Aorta (tissue), 5 donors: ENCODE measurements at regions of chr11 and their contacts with region 1.

Region 1: DNA sequence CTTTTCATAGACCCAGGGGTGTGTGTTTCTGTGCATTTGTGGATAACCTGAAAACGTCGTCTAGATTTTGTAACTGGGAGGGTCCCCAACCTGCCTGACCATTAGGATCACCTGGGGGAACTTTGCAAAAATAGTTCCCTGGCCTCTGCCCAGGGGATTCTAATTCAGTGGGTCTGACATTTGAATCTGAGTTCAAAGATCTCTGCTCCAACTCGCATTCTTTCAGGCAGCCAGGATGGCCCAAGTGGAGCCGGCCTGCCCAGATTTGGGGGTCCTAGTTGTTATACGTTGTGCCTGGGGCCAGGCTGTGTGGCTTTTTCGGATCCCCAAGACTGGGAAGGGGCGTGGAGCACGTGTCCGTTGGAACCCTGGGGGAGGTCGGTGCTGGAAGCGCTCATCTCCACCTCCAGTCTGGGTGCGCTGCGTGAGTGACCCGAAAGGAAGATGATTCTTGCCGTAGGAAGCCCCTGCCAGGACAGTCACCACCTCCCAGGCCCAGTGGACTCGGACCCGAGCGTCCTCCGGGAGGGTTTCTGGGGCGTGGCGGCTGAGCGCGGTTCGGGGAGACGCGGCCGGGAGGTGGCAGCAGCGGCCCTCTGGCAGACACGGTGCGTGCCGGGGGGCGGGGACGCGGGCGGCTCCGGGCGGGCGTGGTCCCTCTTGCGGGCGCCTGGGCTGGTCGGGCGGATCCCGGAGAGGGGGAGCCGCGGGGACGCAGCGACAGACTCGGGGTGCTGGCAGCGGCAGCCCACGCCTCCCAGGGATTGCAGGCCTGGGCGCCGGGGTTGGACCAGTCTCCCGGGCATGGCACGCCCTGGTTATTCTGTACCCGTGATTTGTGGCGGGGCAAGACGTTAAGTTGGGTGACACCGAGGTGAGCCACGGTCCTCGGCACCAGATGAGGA is 29.2 kb upstream of the PLET1 start:
- DNase-seq: peak; percentile 88 to 96
- ATAC-seq: peak; percentile 95
- H3K4me3 ChIP-seq: peak overlapping the region; percentile 55 to 76
- H3K27ac ChIP-seq: peak overlapping the region; percentile 83 to 92
- H3K4me1 ChIP-seq: peaks cover 0 to 2% of the 10 kb centered on the region in 2 donors
- H3K27me3 ChIP-seq: no peaks in the 10 kb centered on the region

Region 2: DNA sequence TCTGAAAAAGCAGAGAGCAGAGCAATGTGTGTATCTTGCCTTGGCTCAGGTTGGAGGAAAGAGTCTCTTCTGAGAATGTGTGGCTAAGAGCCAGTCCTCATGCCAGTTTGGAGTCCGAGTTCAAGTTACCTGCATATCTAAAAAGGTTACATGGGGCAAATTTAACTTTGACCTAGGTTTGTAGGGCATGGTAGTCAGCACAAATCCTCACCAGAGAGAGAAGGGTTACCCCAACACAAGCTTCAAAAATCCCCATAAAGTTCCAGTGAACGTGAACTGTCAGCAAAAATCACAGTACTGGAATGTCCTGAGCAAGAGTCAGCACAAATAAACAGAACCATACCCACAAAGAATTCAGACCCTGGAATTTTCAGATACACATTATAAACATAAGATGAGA is 189.4 kb before region 1 on chr11:
- intact Hi-C with region 1: no loop called
- DNase-seq: no peak
- ATAC-seq: no peak
- H3K4me3 ChIP-seq: no peak overlapping the region
- H3K27ac ChIP-seq: no peak overlapping the region
- H3K4me1 ChIP-seq: no peaks in the 10 kb centered on the region
- H3K27me3 ChIP-seq: no peaks in the 10 kb centered on the region

Region 3: GRCh38 chr11:112318193-112318592 is 28.4 kb after region 1 on chr11:
- intact Hi-C with region 1: loop called in 1 of 2 experiments (anchors 1 kb)
- DNase-seq: no peak
- ATAC-seq: no peak
- H3K4me3 ChIP-seq: no peak overlapping the region
- H3K27ac ChIP-seq: peak overlapping the region in 1 of 2 donors; percentile 65
- H3K4me1 ChIP-seq: peaks cover 3 to 4% of the 10 kb centered on the region in 2 donors
- H3K27me3 ChIP-seq: no peaks in the 10 kb centered on the region

Region 4: GRCh38 chr11:112334381-112334780 is 44.5 kb after region 1 on chr11:
- intact Hi-C with region 1: no loop called
- DNase-seq: no peak
- ATAC-seq: no peak
- H3K4me3 ChIP-seq: no peak overlapping the region
- H3K27ac ChIP-seq: no peak overlapping the region
- H3K4me1 ChIP-seq: no peaks in the 10 kb centered on the region
- H3K27me3 ChIP-seq: no peaks in the 10 kb centered on the region

Region 5: DNA sequence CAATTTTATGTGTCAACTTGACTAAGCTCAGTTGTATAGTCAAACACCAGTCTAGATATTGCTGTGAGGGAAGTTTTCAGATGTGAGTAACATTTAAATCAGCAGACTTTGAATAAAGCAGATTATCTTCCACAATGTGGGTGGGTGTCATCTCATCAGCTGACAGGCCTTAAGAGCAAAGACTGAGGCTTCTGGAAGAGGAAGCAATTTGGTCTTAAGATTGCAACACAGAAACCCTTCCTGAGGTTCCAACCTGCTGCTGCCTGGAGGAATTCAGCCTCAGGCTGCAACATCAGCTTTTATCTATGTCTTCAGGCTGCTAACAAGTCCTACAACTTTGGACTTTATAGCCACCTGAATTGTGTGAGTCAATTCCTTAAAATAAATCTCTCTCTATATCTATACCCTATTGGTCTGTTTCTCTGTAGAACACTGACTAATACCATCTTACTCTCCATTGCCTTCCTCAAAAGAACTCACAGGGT is 248.0 kb after region 1 on chr11:
- intact Hi-C with region 1: no loop called
- DNase-seq: no peak
- ATAC-seq: no peak
- H3K4me3 ChIP-seq: no peak overlapping the region
- H3K27ac ChIP-seq: no peak overlapping the region
- H3K4me1 ChIP-seq: no peaks in the 10 kb centered on the region
- H3K27me3 ChIP-seq: no peaks in the 10 kb centered on the region

Region 6: DNA sequence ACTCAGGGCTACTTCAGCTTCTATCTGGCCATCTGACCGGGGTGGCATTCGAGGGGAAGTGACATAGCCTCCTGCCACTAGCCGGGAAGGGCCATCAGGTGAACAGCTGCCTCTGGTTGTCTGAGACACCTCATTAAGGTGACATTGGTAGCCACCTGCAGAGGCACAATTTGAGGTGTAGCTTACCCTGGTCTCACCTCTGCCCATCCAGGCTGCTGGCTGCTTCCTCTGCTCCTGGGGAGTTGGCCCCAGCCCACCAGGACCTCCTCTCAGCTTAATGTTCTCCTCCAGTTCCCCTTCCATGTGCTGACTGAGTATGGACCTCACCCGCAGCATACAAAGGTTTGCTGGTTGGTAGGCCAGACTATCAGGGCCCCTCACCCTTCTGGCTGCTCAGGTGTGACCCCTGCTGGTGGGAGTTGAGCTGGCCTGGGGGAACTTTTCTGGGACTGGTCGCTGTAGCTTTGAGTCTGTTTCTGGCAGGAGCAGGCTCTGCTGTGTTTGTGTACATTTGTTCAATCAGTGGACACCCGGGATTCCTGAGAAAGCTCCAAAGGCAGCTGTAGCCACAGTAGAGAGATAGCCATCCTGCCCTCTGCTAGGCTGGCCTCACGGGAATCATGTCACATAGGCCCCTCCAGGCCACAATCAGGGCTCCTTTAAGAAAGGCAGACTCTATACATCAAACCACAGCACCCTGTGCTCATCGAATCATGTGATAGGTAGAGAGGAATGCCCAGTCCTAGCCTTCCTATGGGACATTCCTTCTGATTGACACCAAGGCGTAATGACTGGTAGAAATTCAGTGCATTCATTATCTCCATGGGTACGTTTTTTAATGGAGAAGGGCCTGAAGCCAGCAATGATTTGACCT is 265.9 kb after region 1 on chr11:
- intact Hi-C with region 1: loop called (anchors 1 to 5 kb)
- DNase-seq: peak; percentile 68 to 86
- ATAC-seq: peak; percentile 81
- H3K4me3 ChIP-seq: no peak overlapping the region
- H3K27ac ChIP-seq: no peak overlapping the region
- H3K4me1 ChIP-seq: no peaks in the 10 kb centered on the region
- H3K27me3 ChIP-seq: no peaks in the 10 kb centered on the region

Region 7: DNA sequence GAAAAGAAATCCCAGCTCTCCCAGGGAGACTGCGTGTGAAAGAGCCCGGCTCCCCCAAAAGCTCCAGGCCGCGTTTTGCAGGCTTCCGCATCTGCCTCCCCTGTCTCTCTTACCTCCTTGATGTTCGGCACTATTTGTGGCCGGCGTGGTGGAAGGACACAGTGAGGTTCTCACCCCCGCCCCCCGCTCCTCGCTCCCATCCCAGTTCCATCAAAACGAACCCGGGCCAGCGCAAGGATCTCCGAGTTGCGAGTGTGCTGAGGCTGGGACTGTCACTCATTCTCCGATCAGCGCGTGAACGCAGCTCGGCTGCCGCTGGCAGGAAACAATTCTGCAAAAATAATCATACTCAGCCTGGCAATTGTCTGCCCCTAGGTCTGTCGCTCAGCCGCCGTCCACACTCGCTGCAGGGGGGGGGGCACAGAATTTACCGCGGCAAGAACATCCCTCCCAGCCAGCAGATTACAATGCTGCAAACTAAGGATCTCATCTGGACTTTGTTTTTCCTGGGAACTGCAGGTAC is 671.4 kb after region 1 on chr11 and contains the start of gene NCAM1:
- intact Hi-C with region 1: loop called in 1 of 2 experiments (anchors 10 kb)
- DNase-seq: peak; percentile 59 to 82
- ATAC-seq: peak; percentile 62
- H3K4me3 ChIP-seq: peak within 1 kb of the TSS; percentile 58 to 72
- H3K27ac ChIP-seq: no peak within 1 kb of the TSS
- H3K4me1 ChIP-seq: no peaks in the 10 kb centered on the region
- H3K27me3 ChIP-seq: no peaks in the 10 kb centered on the region
- total RNA-seq, gene NCAM1: 10.2 to 19.4 TPM

Region 8: DNA sequence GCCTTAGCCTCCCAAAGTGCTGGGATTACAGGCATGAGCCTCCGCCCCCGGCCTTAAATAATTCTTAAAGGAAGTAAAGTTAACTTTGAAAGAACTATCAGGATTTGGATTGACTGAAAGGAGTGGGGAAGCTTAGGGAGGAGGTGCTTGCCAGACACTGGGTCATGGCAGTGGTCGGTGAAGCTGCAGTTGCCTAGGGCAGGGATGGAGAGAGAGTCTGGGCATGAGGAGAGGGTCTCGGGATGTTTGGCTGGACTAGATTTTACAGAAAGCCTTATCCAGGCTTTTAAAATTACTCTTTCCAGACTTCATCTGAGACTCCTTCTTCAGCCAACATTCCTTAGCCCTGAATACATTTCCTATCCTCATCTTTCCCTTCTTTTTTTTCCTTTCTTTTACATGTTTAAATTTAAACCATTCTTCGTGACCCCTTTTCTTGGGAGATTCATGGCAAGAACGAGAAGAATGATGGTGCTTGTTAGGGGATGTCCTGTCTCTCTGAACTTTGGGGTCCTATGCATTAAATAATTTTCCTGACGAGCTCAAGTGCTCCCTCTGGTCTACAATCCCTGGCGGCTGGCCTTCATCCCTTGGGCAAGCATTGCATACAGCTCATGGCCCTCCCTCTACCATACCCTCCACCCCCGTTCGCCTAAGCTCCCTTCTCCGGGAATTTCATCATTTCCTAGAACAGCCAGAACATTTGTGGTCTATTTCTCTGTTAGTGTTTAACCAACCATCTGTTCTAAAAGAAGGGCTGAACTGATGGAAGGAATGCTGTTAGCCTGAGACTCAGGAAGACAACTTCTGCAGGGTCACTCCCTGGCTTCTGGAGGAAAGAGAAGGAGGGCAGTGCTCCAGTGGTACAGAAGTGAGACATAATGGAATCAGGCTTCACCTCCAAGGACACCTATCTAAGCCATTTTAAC is 2006.1 kb after region 1 on chr11 and contains the start of gene NNMT:
- intact Hi-C with region 1: loop called in 1 of 2 experiments (anchors 10 kb)
- DNase-seq: peak; percentile 91
- ATAC-seq: peak; percentile 90
- H3K4me3 ChIP-seq: peak within 1 kb of the TSS; percentile 95 to 99
- H3K27ac ChIP-seq: peak within 1 kb of the TSS; percentile 90 to 100
- H3K4me1 ChIP-seq: no peaks in the 10 kb centered on the region
- H3K27me3 ChIP-seq: no peaks in the 10 kb centered on the region
- total RNA-seq, gene NNMT: 597 to 862 TPM